Naive thymus-derived CD8-positive, alpha-beta T cell (primary cell): ENCODE measurements at regions of chr1 and their contacts with region 1.

Region 1: GRCh38 chr1:46616277-46617107 is at the start of gene MOB3C:
- DNase-seq: peak; percentile 49 to 81 (median 60)
- ATAC-seq: peak; percentile 81 to 85
- H3K4me3 Mint-ChIP-seq: peak within 1 kb of the TSS; percentile 90 to 97 (median 94)
- H3K27ac Mint-ChIP-seq: peak within 1 kb of the TSS; percentile 89 to 97 (median 94)
- H3K4me1 Mint-ChIP-seq: peaks cover 22 to 66% (median 51%) of the 10 kb centered on the region in 4 donors
- H3K27me3 Mint-ChIP-seq: no peaks in the 10 kb centered on the region
- polyA plus RNA-seq, gene MOB3C: 8.3 to 17.5 (median 8.4) TPM

Region 2: GRCh38 chr1:46603858-46604549 is 12.5 kb before region 1 on chr1 and contains the start of gene MKNK1:
- POLR2A ChIA-PET with region 1: interaction called, 122 read pairs
- DNase-seq: peak; percentile 94 to 99 (median 99)
- ATAC-seq: peak; percentile 91 to 93
- H3K4me3 Mint-ChIP-seq: peak within 1 kb of the TSS; percentile 91 to 97 (median 94)
- H3K27ac Mint-ChIP-seq: peak within 1 kb of the TSS; percentile 88 to 96 (median 94)
- H3K4me1 Mint-ChIP-seq: peaks cover 39 to 70% (median 63%) of the 10 kb centered on the region in 4 donors
- H3K27me3 Mint-ChIP-seq: no peaks in the 10 kb centered on the region
- polyA plus RNA-seq, gene MKNK1: 17.6 to 19.7 (median 18.7) TPM